ENCODE measurements at regions of chr19 and their contacts with region 1.

Region 1: DNA sequence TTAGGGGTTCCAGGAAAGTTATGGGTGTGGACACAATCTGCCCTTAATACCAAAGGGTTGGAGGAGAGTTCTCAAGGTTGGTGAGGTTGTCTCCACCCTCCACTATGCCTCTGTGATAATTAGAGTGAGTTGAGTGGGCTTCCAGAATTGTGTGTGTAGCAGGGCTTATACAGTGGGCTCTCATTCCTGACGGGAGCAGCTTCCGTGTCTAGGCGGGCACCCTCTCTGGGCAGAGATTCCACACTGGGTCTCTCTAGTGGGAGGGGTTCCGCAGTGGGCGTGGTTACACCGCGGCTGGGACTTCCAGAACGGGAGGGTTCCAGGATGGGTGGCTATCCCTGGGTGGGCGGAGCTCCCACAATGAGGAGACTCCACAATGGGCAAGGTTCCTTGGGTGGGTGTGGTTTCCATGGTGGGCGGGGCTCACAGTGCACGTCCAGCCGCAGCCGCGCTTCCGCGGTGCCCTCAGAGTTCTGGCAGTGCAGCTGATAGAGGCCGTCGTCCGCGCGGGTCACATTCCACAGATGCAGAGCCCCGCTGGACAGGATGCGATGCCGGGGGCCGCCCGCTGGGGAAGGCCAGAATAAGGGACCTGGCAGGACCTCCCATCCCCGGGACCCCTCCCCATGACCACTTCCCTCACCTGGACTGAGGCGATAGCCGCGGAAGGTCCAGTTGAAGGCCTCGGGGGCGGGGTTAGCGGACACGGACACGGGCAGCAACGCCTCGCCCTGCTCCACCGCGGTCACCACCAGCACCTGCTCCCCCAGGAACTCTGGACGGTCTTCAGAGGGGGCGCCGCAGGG is 8.4 kb downstream of the NPHS1 start:
- DNase-seq: peak; percentile 3
- H3K4me3 ChIP-seq: no peak overlapping the region
- H3K27ac ChIP-seq: no peak overlapping the region
- H3K4me1 ChIP-seq: peaks cover 11% of the 10 kb centered on the region
- H3K27me3 ChIP-seq: peaks cover 3% of the 10 kb centered on the region
- CTCF ChIP-seq: no peak

Region 2: DNA sequence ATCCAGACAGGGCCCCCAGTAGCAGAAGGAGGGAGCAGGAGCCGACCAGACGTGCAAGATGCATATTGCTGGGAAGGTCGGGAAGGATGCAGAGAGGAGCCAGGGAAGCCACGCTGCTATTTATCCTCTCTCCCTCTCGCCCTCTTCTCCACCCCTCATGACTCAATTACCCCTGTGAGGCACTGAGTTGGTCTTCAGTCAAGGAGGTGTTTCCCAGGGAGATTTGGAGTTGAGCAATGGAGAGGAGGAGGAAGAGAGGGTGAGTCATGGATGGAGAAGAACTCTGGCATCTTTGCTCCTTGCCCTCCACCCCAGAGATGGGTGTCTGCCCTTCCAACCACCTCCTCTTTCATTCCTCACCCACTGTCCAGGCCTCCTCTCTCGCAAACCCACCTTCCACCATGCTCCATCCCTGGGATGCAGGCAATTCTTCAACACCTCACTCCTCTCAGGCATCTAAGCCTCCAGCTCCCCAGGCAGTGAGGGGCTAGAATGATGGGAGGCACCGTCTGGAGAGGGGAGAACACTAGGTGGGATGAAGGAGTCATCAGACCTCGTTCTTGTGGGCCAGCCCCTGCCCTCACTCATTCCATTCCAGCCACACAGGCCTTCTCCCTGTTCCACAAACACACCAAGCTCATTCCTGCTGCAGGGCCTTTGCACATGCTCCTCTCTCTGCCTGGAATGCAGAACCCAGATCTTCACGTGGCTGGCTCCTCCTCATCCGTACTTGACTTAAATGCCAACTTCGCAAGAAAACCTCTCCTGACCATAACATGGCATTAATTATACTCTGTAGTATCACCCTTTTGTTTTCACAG is 315.5 kb before region 1 on chr19 and contains the start of gene SBSN:
- CTCF ChIA-PET with region 1: no interaction called
- dilution Hi-C with region 1: loop called (anchors 5 kb)
- in situ Hi-C with region 1: no loop called
- intact Hi-C with region 1: no loop called
- DNase-seq: peak; percentile 86
- H3K4me3 ChIP-seq: no peak within 1 kb of the TSS
- H3K27ac ChIP-seq: no peak within 1 kb of the TSS
- H3K4me1 ChIP-seq: peaks cover under 1% of the 10 kb centered on the region
- H3K27me3 ChIP-seq: no peaks in the 10 kb centered on the region
- CTCF ChIP-seq: no peak
- total RNA-seq, gene SBSN: 0.17 to 2.9 TPM

Measured in mammary epithelial cell (primary cell).